ENCODE measurements at regions of chr22 and their contacts with region 1.

Region 1: GRCh38 chr22:20116951-20117645 is at the start of gene TRMT2A:
- DNase-seq: peak; percentile 99
- ATAC-seq: peak; percentile 85
- H3K4me3 Mint-ChIP-seq: peak within 1 kb of the TSS; percentile 97
- H3K27ac Mint-ChIP-seq: peak within 1 kb of the TSS; percentile 98
- H3K4me1 Mint-ChIP-seq: peaks cover 24% of the 10 kb centered on the region
- H3K27me3 Mint-ChIP-seq: no peaks in the 10 kb centered on the region
- total RNA-seq, gene TRMT2A: 107 to 118 TPM

Region 2: DNA sequence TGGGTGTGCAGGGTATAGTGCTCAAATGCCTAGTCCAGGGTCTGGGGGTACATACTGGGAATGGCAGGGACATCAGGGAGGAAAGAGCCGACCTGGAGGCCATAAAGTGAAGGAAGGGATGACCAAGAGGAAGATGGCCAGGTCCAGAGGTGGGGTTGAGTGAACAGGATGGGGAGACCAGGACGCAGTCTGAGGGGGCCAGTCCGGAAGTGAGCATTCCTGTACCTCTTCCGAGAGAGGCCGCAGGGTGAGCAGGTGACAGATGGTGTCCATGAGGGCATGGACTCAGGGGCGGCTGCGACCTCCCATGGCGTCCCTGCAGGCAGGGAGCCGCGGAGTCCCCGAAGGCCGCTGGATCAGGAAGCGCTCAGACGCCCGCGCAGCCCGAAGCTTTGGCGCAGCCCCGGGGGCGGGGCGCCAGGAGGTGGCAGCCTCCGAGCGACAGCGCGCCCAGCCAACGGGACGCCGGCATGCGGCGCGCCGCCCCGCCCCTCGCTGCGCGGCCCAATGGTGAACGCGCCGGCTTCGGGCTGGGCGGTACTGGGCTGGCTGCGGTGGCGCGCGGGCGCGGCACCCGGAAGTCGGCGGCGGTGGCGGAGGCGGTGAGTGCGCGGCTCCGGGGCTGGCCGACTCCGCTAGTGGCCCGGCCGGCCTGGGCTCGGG is 96.4 kb before region 1 on chr22 and contains the start of gene TANGO2:
- POLR2A ChIA-PET with region 1: interaction called, 10 read pairs
- DNase-seq: peak; percentile 99
- ATAC-seq: peak; percentile 90
- H3K4me3 Mint-ChIP-seq: peak within 1 kb of the TSS; percentile 92
- H3K27ac Mint-ChIP-seq: peak within 1 kb of the TSS; percentile 95
- H3K4me1 Mint-ChIP-seq: peaks cover 18% of the 10 kb centered on the region
- H3K27me3 Mint-ChIP-seq: peaks cover 22% of the 10 kb centered on the region
- total RNA-seq, gene TANGO2: 40.7 to 41.2 TPM

Region 3: DNA sequence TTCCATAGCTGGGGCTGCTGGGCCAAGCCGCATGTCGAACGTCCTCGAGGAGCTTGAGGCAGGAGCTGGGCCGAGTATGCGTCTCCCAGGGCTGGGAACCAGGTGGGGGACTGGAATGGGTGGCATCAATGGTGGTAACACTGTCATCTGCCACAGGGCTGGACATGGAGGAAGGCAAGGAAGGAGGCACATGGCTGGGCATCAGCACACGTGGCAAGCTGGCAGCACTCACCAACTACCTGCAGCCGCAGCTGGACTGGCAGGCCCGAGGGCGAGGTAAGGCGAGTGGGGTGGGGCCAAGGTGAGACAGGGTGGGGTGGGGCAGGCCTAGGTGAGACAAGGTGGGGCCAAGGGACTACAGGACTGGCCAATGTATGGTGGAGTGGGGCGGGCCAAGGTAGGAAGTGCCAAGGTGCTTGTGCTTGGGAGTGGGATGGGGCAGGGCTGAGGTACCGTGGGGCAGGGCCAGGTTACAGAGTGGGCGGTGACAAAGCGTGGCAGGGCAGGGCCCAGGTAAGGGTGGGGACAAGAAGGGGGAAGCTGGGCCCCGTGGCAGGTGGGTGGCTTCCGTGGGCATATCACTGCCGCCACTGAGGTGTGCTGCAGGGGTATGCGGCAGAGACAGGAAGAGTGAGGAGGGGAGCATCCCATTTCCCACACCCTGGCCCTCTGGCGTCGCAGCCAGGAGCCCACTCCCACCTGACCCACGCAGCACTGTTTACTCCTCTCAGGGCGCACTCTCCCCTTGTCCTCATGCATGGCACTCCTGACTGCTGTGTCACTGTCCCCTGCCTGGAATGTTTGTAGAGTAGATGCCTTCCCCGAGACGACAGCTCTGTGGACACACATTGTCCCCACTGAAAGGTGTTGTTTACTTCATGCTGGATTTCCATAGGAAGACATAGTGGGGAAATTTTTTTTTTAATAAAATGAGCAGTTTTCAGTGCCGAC is 64.5 kb before region 1 on chr22:
- POLR2A ChIA-PET with region 1: no interaction called
- DNase-seq: no peak
- ATAC-seq: no peak
- H3K4me3 Mint-ChIP-seq: no peak overlapping the region
- H3K27ac Mint-ChIP-seq: peak overlapping the region; percentile 16
- H3K4me1 Mint-ChIP-seq: no peaks in the 10 kb centered on the region
- H3K27me3 Mint-ChIP-seq: no peaks in the 10 kb centered on the region

Region 4: DNA sequence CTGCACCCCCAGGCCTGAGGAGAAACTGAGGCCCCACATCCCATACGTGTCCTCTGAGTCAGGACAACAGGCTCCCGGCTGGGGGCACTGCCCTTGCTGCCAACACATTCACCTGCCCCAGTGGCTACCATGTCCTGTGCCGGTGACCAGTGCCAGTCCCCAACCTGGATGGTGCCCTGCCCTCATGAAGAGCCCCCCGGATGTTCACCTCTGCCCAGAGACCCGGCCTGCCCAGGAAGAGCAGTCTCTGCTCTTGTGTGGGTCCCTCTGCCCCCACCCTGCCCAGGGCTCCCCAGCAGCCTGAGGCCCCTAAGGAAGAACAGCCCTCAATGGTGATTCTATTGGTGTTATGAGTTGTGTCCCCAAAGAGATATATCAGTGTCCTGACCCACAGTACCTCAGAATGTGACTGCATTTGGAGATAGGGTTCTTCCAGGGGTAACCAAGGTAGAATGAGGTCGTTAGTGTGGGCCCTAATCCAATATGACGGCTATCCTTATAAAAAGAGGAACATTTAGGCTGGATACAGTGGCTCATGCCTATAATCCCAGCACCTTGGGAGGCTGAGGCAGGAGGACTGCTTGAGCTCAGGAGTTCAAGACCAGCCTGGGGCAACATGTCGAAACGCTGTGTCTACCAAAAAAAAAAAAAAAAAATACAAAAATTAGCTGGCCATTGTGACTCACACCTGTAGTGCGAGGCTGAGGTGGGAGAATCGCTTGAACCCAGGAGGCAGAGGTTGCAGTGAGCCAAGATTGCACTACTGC is 50.3 kb before region 1 on chr22:
- POLR2A ChIA-PET with region 1: no interaction called
- DNase-seq: no peak
- ATAC-seq: no peak
- H3K4me3 Mint-ChIP-seq: no peak overlapping the region
- H3K27ac Mint-ChIP-seq: no peak overlapping the region
- H3K4me1 Mint-ChIP-seq: no peaks in the 10 kb centered on the region
- H3K27me3 Mint-ChIP-seq: no peaks in the 10 kb centered on the region

Region 5: GRCh38 chr22:20102203-20102780 is 14.8 kb before region 1 on chr22:
- POLR2A ChIA-PET with region 1: interaction called, 24 read pairs
- DNase-seq: no peak
- ATAC-seq: no peak
- H3K4me3 Mint-ChIP-seq: no peak overlapping the region
- H3K27ac Mint-ChIP-seq: peak overlapping the region; percentile 54
- H3K4me1 Mint-ChIP-seq: peaks cover 41% of the 10 kb centered on the region
- H3K27me3 Mint-ChIP-seq: no peaks in the 10 kb centered on the region

Region 6: GRCh38 chr22:20229916-20230775 is 113.0 kb after region 1 on chr22:
- POLR2A ChIA-PET with region 1: no interaction called
- DNase-seq: no peak
- ATAC-seq: no peak
- H3K4me3 Mint-ChIP-seq: no peak overlapping the region
- H3K27ac Mint-ChIP-seq: no peak overlapping the region
- H3K4me1 Mint-ChIP-seq: no peaks in the 10 kb centered on the region
- H3K27me3 Mint-ChIP-seq: no peaks in the 10 kb centered on the region

Region 7: GRCh38 chr22:20258584-20259326 is 141.7 kb after region 1 on chr22:
- POLR2A ChIA-PET with region 1: no interaction called
- DNase-seq: no peak
- ATAC-seq: no peak
- H3K4me3 Mint-ChIP-seq: no peak overlapping the region
- H3K27ac Mint-ChIP-seq: peak overlapping the region; percentile 30
- H3K4me1 Mint-ChIP-seq: peaks cover 10% of the 10 kb centered on the region
- H3K27me3 Mint-ChIP-seq: no peaks in the 10 kb centered on the region